AG04450 (cell line): ENCODE measurements at regions of chr11 and their contacts with region 1.

Region 1: DNA sequence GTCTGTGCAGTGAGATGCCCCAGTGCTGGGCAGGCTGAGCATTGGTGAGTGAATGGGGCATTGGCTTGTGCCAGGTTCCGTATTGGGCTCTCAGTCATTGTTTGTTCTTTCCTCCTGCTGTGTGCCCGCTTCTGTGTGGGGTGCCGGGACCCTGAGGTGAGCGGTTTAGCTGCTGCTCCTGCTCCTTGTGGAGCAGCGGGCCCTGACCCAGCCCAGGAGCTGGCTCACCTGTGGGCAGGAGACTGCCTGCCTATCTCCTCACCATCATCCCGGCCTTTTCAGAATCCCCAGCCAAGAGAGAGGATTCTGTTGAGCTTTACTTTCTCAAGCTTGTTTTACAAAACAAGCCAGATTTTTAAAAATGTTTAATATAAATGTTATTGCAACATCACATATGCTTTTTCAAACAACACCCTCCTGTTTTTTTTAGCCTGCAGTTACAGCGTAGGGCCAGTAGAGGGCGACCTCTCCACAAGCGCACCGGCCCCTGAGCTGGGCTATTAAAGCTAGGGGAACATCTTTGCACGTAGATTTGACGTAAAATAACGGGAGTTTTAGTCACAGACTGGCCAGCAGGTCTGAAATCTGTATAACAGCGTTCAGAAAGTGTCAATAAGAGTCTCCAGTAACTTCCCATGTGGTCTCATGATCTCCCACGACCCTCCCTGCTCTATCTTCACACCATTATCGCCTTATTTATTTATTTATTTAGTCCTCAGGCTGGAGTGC is 25.1 kb upstream of the RELT start:
- DNase-seq: peak; percentile 57
- H3K4me3 ChIP-seq: no peak overlapping the region
- H3K27ac ChIP-seq: peak overlapping the region; percentile 57
- H3K27me3 ChIP-seq: no peaks in the 10 kb centered on the region
- CTCF ChIP-seq: peak; percentile 98

Region 2: DNA sequence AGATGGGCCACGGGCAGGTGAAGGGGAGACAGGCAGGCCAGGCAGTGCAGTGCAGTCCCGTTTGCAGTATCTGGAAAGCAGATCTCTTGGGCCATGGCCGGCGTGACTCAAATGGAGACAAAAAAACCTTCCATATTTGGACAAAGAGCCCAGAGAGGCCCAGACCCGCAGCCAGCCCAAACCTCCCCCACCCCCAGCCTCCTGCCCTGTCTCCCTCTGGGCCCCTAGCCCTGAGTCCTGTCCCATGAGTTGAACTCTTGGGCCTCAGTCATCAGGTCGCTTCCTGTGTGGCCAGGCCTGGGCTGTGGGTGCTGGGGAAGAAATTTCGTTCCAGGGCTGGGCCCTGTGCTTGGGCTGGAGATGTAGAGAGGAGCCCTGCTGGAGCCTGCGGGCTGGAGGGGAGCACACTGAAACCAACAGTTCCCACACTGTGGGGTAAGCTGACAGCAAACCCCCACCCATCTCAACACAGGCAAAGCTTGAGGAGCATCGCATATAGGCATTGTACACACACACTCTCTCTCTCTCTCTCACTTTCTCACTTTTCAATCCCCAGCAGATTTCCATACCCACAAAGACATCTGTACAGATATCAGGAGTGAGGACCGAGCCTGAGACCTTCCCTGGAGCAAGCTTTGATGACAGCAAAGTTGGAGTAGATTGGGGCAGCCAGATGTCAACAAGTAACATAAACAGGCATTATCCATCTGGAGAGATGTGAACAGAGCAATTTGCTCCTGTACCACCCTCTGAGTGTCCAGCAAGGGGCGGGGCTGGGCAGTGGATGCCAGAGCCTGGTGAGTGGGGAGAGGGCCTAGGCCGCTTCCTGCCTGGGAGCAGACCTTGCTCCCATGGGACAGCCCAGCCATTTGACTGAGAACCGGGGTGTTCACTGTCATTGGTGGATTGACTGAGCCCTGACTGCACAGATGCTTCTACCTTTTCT is 25.8 kb before region 1 on chr11:
- CTCF ChIA-PET with region 1: interaction called, 17 read pairs
- POLR2A ChIA-PET with region 1: interaction called, 6 read pairs
- DNase-seq: no peak
- H3K4me3 ChIP-seq: no peak overlapping the region
- H3K27ac ChIP-seq: peak overlapping the region; percentile 87
- H3K27me3 ChIP-seq: no peaks in the 10 kb centered on the region
- CTCF ChIP-seq: no peak

Region 3: DNA sequence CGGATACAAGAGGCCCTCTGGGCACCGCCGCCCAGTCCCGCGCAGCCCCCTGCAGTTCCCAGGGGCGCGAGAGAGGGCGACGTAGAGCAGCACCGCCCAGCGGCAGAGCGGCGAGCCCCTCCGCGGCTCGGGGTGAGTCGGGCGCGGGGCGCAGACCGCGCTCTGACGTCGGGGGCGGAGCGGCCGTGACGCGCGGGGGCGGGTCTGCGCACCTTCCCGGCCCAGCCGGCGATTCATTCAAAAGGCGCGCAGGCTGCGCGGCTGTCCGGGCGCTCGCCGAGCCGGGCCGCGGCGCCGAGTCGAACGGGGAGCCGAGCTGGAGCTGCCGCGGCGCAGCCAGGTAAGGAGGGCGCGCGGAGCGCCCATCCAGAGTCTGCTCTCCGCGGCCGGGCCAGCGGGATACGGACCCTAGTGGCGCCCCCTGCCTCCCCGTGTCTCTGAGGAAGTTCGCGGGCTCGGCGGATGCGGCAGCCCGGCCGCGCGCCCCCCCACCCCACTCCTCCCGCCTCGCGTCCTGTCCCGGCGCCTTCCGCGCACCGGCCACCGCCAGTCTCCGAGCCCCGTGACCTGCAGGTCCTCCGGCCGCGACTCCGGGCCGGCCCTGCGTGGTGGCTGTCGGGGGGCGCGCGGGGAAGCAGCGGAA is 25.2 kb after region 1 on chr11 and contains the start of gene RELT:
- CTCF ChIA-PET with region 1: interaction called, 27 read pairs
- POLR2A ChIA-PET with region 1: interaction called, 4 read pairs
- DNase-seq: peak; percentile 69
- H3K4me3 ChIP-seq: peak within 1 kb of the TSS; percentile 76
- H3K27ac ChIP-seq: no peak within 1 kb of the TSS
- H3K27me3 ChIP-seq: no peaks in the 10 kb centered on the region
- CTCF ChIP-seq: peak; percentile 74
- polyA plus RNA-seq, gene RELT: 1.1 TPM in 2 replicates

Region 4: DNA sequence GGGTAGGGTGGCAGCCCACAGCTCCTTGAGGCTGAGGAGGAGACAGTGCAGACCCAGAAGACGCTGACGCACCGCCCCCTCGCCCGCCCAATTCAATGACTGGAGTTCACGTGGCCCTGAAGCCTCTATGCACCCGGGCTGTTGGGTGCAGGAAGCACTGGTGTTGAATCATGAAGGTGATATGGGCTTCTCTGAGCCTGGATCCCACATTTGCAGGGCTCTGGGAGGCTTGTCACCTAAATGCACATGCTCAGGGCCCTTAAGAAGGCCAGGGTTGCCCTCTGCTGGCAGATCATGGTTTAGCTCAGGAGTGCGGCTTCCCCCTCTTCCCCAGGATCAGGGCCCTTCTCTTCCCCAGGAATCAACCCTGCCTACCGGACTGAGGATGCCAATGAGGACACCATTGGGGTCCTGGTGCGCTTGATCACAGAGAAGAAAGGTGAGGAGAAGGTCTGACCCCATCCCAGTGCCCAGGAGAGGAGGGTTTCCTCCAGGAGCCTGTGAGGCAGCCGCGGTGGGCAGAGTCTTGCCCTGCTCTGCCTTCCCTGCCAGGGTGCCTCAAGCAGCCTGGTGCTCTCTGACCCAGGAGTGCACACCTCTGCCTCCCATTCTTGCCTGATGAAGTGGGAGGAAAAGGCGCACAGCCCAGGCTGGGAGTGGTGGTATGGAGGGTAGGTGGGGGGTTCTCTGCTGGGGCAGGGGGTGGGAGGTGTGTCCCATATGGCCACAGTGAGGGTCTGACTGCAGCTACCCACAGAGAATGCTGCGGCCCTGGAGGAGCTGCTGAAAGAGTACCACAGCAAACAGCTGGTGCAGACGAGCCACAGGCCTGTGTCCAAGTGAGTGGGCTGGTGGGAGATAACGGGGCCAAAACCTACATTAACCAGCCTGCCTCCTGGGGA is 42.7 kb after region 1 on chr11:
- CTCF ChIA-PET with region 1: interaction called, 43 read pairs
- POLR2A ChIA-PET with region 1: interaction called, 5 read pairs
- DNase-seq: peak; percentile 59
- H3K4me3 ChIP-seq: no peak overlapping the region
- H3K27ac ChIP-seq: peak overlapping the region; percentile 39
- H3K27me3 ChIP-seq: no peaks in the 10 kb centered on the region
- CTCF ChIP-seq: peak; percentile 91